PC-9 (cell line): ENCODE measurements at regions of chr3 and their contacts with region 1.

Region 1: GRCh38 chr3:50587806-50588758 is 18.8 kb downstream of the HEMK1 start:
- DNase-seq: no peak
- H3K4me3 ChIP-seq: no peak overlapping the region
- H3K27ac ChIP-seq: no peak overlapping the region
- H3K4me1 ChIP-seq: no peaks in the 10 kb centered on the region
- H3K27me3 ChIP-seq: no peaks in the 10 kb centered on the region
- CTCF ChIP-seq: no peak

Region 2: GRCh38 chr3:50486219-50486888 is 101.7 kb before region 1 on chr3:
- CTCF ChIA-PET with region 1: no interaction called
- POLR2A ChIA-PET with region 1: interaction called, 11 read pairs
- intact Hi-C with region 1: no loop called
- DNase-seq: no peak
- H3K4me3 ChIP-seq: no peak overlapping the region
- H3K27ac ChIP-seq: no peak overlapping the region
- H3K4me1 ChIP-seq: no peaks in the 10 kb centered on the region
- H3K27me3 ChIP-seq: peaks cover 24% of the 10 kb centered on the region
- CTCF ChIP-seq: no peak

Region 3: DNA sequence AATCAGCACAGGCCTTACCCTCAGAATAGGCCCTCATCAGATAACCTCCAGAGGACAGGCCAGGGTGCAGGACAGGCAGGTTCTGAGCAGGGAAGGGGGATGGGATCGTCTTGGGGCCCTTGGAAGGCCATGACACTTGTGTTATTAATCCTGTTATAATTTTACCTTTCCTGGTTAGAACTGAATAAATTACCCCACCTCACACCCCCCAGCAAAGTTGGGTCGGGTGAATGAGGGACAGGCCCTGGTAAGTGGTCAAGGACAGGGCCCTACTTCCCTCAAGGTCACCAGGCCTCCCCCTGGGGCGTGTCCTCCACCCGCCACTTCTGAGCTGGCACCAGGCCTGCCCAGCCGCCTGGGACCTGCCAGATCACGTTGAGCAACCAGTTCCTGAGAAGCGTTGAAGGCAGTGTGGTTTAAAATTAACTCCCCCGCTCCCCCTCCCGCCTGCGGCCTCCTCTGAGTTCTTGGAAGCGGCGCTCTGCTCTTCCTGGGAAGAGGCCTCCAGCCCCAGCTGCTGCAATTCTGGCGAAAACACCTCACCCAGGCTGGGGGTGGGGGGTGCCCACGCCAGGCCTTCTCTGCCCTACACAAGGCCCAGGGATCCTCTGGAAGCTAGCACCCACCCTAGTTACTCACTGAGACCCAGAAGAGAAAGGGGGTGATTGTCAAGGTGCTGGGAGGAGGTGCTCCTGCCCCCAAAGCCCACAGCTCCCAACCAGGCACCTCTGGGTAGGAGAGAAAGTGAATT is 12.9 kb after region 1 on chr3:
- CTCF ChIA-PET with region 1: interaction called, 4 read pairs
- POLR2A ChIA-PET with region 1: interaction called, 21 read pairs
- intact Hi-C with region 1: no loop called
- DNase-seq: peak; percentile 76 to 81
- H3K4me3 ChIP-seq: no peak overlapping the region
- H3K27ac ChIP-seq: peak overlapping the region; percentile 39; the same call in 1 of the 2 replicates
- H3K4me1 ChIP-seq: peaks cover 38% of the 10 kb centered on the region
- H3K27me3 ChIP-seq: no peaks in the 10 kb centered on the region
- CTCF ChIP-seq: no peak